ENCODE measurements at regions of chr5 and their contacts with region 1.

Region 1: DNA sequence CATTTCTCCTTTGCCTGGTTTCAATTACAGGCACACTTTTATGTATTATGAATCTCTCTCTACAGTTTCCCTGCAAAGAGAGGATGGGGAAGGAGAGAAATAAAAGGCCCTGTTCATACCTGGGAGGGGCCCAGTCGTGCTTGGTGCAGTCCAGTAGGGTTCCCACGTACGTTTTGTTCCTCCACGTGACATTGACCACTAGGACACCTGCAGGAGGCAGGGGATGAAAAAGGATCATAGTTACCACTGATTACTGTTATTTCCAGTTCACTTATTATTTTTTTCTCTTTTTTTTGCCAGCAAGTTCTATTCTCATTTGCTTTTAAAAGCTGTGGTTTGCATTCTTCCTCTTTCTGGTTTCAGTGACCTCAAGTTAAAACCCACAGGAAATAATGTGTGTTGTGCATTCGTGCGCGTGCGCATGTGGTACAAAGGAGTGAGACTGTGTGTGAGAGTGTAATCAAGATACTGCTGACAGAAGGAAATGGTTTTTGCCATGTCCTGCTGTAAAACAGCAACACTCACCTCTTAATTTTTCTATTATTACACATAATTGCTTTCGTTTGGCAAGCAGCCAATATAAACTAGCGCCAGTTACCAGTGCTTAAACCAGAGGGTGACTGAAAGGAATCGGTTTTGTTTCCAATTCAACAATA is 96.8 kb downstream of the ZNF608 start:
- DNase-seq: peak in 1 of 2 donors; percentile 44
- ATAC-seq: no peak
- H3K4me3 ChIP-seq: peak overlapping the region; percentile 1 to 29 (median 19)
- H3K27ac ChIP-seq: peak overlapping the region; percentile 76 to 86 (median 83)
- H3K4me1 ChIP-seq: peaks cover 39 to 45% of the 10 kb centered on the region in 2 donors
- H3K27me3 ChIP-seq: no peaks in the 10 kb centered on the region
- CTCF ChIP-seq: no peak
- POLR2A ChIP-seq: no peak

Region 2: GRCh38 chr5:123937230-123937629 is 712.4 kb before region 1 on chr5:
- in situ Hi-C with region 1: no loop called
- intact Hi-C with region 1: loop called (anchors 5 kb)
- DNase-seq: peak in 1 of 2 donors; percentile 17
- ATAC-seq: peak in 1 of 2 donors; percentile 60
- H3K4me3 ChIP-seq: no peak overlapping the region
- H3K27ac ChIP-seq: no peak overlapping the region
- H3K4me1 ChIP-seq: no peaks in the 10 kb centered on the region
- H3K27me3 ChIP-seq: no peaks in the 10 kb centered on the region
- CTCF ChIP-seq: peak; percentile 35 to 67 (median 61)
- POLR2A ChIP-seq: no peak

Region 3: GRCh38 chr5:124530916-124531315 is 118.7 kb before region 1 on chr5:
- in situ Hi-C with region 1: no loop called
- intact Hi-C with region 1: loop called (anchors 5 kb)
- DNase-seq: no peak
- ATAC-seq: no peak
- H3K4me3 ChIP-seq: no peak overlapping the region
- H3K27ac ChIP-seq: no peak overlapping the region
- H3K4me1 ChIP-seq: peaks cover 9 to 10% of the 10 kb centered on the region in 2 donors
- H3K27me3 ChIP-seq: no peaks in the 10 kb centered on the region
- CTCF ChIP-seq: no peak
- POLR2A ChIP-seq: no peak

Region 4: GRCh38 chr5:124824637-124825158 is 175.1 kb after region 1 on chr5:
- in situ Hi-C with region 1: no loop called
- intact Hi-C with region 1: loop called (anchors 5 kb)
- DNase-seq: peak in 1 of 2 donors; percentile 37
- ATAC-seq: peak; percentile 94 to 96
- H3K4me3 ChIP-seq: no peak overlapping the region
- H3K27ac ChIP-seq: peak overlapping the region in 3 of 4 donors; percentile 34 to 72 (median 51)
- H3K4me1 ChIP-seq: peaks cover 3 to 4% of the 10 kb centered on the region in 2 donors
- H3K27me3 ChIP-seq: no peaks in the 10 kb centered on the region
- CTCF ChIP-seq: peak in 1 of 5 experiments; percentile 8
- POLR2A ChIP-seq: no peak

Region 5: DNA sequence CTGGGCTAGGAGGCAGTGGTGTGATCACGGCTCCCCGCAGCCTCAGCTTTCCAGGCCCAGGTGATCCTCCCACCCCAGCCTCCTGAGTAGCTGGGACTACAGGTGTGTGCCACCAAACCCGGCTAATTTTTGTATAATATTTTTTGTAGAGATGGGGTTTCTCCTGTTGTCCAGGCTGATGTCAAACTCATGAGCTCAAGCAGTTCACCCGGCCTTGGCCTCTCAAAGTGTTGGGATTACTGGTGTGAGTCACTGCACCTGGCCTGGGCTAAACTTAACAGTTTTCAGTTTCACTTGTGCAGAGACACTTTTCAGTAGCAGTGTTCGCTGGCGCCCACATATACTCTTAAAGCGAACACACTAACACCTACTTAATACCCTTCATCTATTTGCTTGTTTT is 302.5 kb after region 1 on chr5:
- in situ Hi-C with region 1: no loop called
- intact Hi-C with region 1: loop called (anchors 10 kb)
- DNase-seq: peak in 1 of 2 donors; percentile 16
- ATAC-seq: peak in 1 of 2 donors; percentile 51
- H3K4me3 ChIP-seq: no peak overlapping the region
- H3K27ac ChIP-seq: peak overlapping the region in 1 of 4 donors; percentile 19
- H3K4me1 ChIP-seq: peaks cover 8 to 14% of the 10 kb centered on the region in 2 donors
- H3K27me3 ChIP-seq: no peaks in the 10 kb centered on the region
- CTCF ChIP-seq: no peak
- POLR2A ChIP-seq: no peak

Measured in gastrocnemius medialis (tissue), 4 donors.